RWPE1 (cell line): ENCODE measurements at regions of chr5 and their contacts with region 1.

Region 1: DNA sequence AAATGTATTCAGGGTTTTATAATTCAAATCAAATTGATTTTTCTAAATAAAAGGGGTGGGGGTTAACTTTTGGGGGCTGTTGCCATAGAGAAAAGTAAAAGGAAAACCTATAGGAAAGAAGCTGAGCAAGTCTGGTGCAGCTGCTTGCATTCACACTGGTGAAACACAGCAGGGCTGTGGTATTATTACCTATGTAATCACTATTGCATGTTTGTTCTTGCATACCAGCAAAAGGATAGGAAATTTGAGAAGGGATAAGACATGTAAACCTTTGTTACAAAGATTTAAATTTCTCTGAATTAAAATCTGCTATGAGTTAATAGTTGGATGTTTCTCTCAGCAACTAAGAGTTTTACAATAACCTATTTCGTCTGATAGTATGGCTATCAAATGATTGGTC is 346.7 kb downstream of the EFNA5 start:
- DNase-seq: no peak
- H3K27ac ChIP-seq: no peak overlapping the region
- CTCF ChIP-seq: no peak

Region 2: GRCh38 chr5:107408564-107408963 is 84.5 kb after region 1 on chr5:
- CTCF ChIA-PET with region 1: no interaction called
- POLR2A ChIA-PET with region 1: no interaction called
- DNase-seq: no peak
- H3K27ac ChIP-seq: no peak overlapping the region
- CTCF ChIP-seq: no peak

Region 3: GRCh38 chr5:107542428-107542827 is 218.4 kb after region 1 on chr5:
- CTCF ChIA-PET with region 1: no interaction called
- POLR2A ChIA-PET with region 1: no interaction called
- DNase-seq: peak; percentile 96
- H3K27ac ChIP-seq: peak overlapping the region; percentile 93
- CTCF ChIP-seq: no peak

Region 4: DNA sequence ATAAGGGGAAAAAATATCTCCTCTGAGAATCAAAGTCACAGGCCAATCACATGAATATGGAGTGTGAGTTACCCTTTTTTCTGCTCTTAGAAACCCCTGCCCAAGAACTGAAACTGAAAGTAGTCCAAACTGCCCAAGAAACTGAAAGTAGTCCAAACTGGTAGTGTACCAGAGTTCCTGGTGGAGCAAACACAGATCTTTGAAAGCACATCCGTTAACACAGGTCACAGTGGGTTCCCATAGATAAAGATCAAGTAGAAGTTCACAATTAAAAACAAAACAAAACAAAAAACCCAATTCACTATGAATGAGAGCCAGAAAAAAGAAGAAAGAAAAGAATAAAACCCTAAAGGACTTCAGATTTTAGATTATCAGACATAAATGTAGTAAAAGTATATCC is 679.1 kb after region 1 on chr5:
- CTCF ChIA-PET with region 1: interaction called, 10 read pairs
- POLR2A ChIA-PET with region 1: no interaction called
- DNase-seq: peak; percentile 32
- H3K27ac ChIP-seq: no peak overlapping the region
- CTCF ChIP-seq: no peak